H1 (cell line): ENCODE measurements at regions of chrX and their contacts with region 1.

Region 1: GRCh38 chrX:24748202-24748843 is 54.6 kb downstream of the POLA1 start:
- DNase-seq: no peak
- H3K4me3 ChIP-seq: no peak overlapping the region
- H3K27ac ChIP-seq: no peak overlapping the region
- H3K4me1 ChIP-seq: no peaks in the 10 kb centered on the region
- H3K27me3 ChIP-seq: no peaks in the 10 kb centered on the region
- CTCF ChIP-seq: no peak
- EP300 ChIP-seq: no peak
- POLR2A ChIP-seq: no peak
- RAD21 ChIP-seq: no peak

Region 2: GRCh38 chrX:24728530-24728929 is 19.8 kb before region 1 on chrX:
- CTCF ChIA-PET with region 1: no interaction called
- POLR2A ChIA-PET with region 1: no interaction called
- DNase-seq: no peak
- H3K4me3 ChIP-seq: no peak overlapping the region
- H3K27ac ChIP-seq: no peak overlapping the region
- H3K4me1 ChIP-seq: no peaks in the 10 kb centered on the region
- H3K27me3 ChIP-seq: no peaks in the 10 kb centered on the region
- CTCF ChIP-seq: no peak
- EP300 ChIP-seq: no peak
- POLR2A ChIP-seq: no peak
- RAD21 ChIP-seq: no peak

Region 3: GRCh38 chrX:24761306-24761705 is 13.0 kb after region 1 on chrX:
- CTCF ChIA-PET with region 1: interaction called, 15 read pairs
- POLR2A ChIA-PET with region 1: no interaction called
- DNase-seq: no peak
- H3K4me3 ChIP-seq: no peak overlapping the region
- H3K27ac ChIP-seq: no peak overlapping the region
- H3K4me1 ChIP-seq: no peaks in the 10 kb centered on the region
- H3K27me3 ChIP-seq: no peaks in the 10 kb centered on the region
- CTCF ChIP-seq: no peak
- EP300 ChIP-seq: no peak
- POLR2A ChIP-seq: no peak
- RAD21 ChIP-seq: no peak

Region 4: GRCh38 chrX:24767557-24767956 is 19.2 kb after region 1 on chrX:
- CTCF ChIA-PET with region 1: interaction called, 15 read pairs
- POLR2A ChIA-PET with region 1: no interaction called
- DNase-seq: no peak
- H3K4me3 ChIP-seq: no peak overlapping the region
- H3K27ac ChIP-seq: no peak overlapping the region
- H3K4me1 ChIP-seq: no peaks in the 10 kb centered on the region
- H3K27me3 ChIP-seq: no peaks in the 10 kb centered on the region
- CTCF ChIP-seq: no peak
- EP300 ChIP-seq: no peak
- POLR2A ChIP-seq: no peak
- RAD21 ChIP-seq: no peak

Region 5: GRCh38 chrX:24946369-24946768 is 198.0 kb after region 1 on chrX:
- CTCF ChIA-PET with region 1: no interaction called
- POLR2A ChIA-PET with region 1: no interaction called
- DNase-seq: no peak
- H3K4me3 ChIP-seq: no peak overlapping the region
- H3K27ac ChIP-seq: no peak overlapping the region
- H3K4me1 ChIP-seq: no peaks in the 10 kb centered on the region
- H3K27me3 ChIP-seq: no peaks in the 10 kb centered on the region
- CTCF ChIP-seq: no peak
- EP300 ChIP-seq: no peak
- POLR2A ChIP-seq: no peak
- RAD21 ChIP-seq: no peak